A673 (cell line): ENCODE measurements at regions of chr17 and their contacts with region 1.

Region 1: GRCh38 chr17:40399185-40399584 is 18.5 kb downstream of the TOP2A start:
- DNase-seq: peak; percentile 61
- H3K4me3 ChIP-seq: no peak overlapping the region
- H3K27ac ChIP-seq: no peak overlapping the region
- H3K4me1 ChIP-seq: no peaks in the 10 kb centered on the region
- H3K27me3 ChIP-seq: no peaks in the 10 kb centered on the region
- CTCF ChIP-seq: peak; percentile 49

Region 2: GRCh38 chr17:40139566-40140058 is 259.6 kb before region 1 on chr17:
- CTCF ChIA-PET with region 1: no interaction called
- POLR2A ChIA-PET with region 1: no interaction called
- intact Hi-C with region 1: no loop called
- DNase-seq: no peak
- H3K4me3 ChIP-seq: peak overlapping the region; percentile 58
- H3K27ac ChIP-seq: peak overlapping the region; percentile 90
- H3K4me1 ChIP-seq: peaks cover 5% of the 10 kb centered on the region
- H3K27me3 ChIP-seq: no peaks in the 10 kb centered on the region
- CTCF ChIP-seq: no peak

Region 3: GRCh38 chr17:40542558-40543411 is 143.6 kb after region 1 on chr17:
- CTCF ChIA-PET with region 1: no interaction called
- POLR2A ChIA-PET with region 1: interaction called, 14 read pairs
- intact Hi-C with region 1: no loop called
- DNase-seq: no peak
- H3K4me3 ChIP-seq: no peak overlapping the region
- H3K27ac ChIP-seq: no peak overlapping the region
- H3K4me1 ChIP-seq: peaks cover 10% of the 10 kb centered on the region
- H3K27me3 ChIP-seq: no peaks in the 10 kb centered on the region
- CTCF ChIP-seq: no peak